Left ventricle myocardium inferior (tissue), 1 donor: ENCODE measurements at regions of chr16 and their contacts with region 1.

Region 1: GRCh38 chr16:28069971-28070794 is 6.7 kb upstream of the GSG1L start:
- DNase-seq: no peak
- H3K4me3 ChIP-seq: no peak overlapping the region
- H3K27ac ChIP-seq: no peak overlapping the region
- H3K4me1 ChIP-seq: peaks cover 10% of the 10 kb centered on the region
- H3K27me3 ChIP-seq: peaks cover 36% of the 10 kb centered on the region
- CTCF ChIP-seq: no peak

Region 2: GRCh38 chr16:27972500-27972899 is 97.7 kb before region 1 on chr16:
- intact Hi-C with region 1: loop called (anchors 10 kb)
- DNase-seq: no peak
- H3K4me3 ChIP-seq: no peak overlapping the region
- H3K27ac ChIP-seq: no peak overlapping the region
- H3K4me1 ChIP-seq: peaks cover under 1% of the 10 kb centered on the region
- H3K27me3 ChIP-seq: peaks cover 49% of the 10 kb centered on the region
- CTCF ChIP-seq: peak; percentile 64

Region 3: GRCh38 chr16:28140788-28141618 is 70.8 kb after region 1 on chr16:
- intact Hi-C with region 1: no loop called
- DNase-seq: no peak
- H3K4me3 ChIP-seq: no peak overlapping the region
- H3K27ac ChIP-seq: peak overlapping the region; percentile 48
- H3K4me1 ChIP-seq: peaks cover 10% of the 10 kb centered on the region
- H3K27me3 ChIP-seq: no peaks in the 10 kb centered on the region
- CTCF ChIP-seq: no peak